Testis (tissue), 5 donors: ENCODE measurements at regions of chr4 and their contacts with region 1.

Region 1: GRCh38 chr4:13876131-13876530 is 248.6 kb upstream of the BOD1L1 start:
- DNase-seq: no peak
- H3K4me3 ChIP-seq: no peak overlapping the region
- H3K27ac ChIP-seq: no peak overlapping the region
- H3K4me1 ChIP-seq: no peaks in the 10 kb centered on the region
- H3K27me3 ChIP-seq: no peaks in the 10 kb centered on the region
- CTCF ChIP-seq: no peak
- POLR2A ChIP-seq: no peak

Region 2: DNA sequence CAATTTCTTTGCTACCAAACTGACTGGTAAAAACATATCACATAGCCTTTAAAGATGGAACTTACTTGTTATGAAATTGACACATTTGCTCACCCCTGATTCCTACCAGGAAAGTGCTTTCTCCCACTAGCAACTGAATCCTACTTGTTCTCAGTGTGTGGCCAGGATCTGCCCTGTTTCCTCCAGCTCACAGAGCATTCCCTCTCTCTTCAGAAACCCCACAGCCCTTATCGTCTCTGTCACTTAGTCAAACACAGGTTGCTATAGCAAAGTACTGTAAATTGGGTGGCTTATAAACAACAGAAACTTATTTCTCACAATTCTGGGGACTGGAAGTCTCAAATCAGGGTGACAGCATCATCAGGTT is 16.6 kb after region 1 on chr4:
- intact Hi-C with region 1: no loop called
- DNase-seq: no peak
- H3K4me3 ChIP-seq: no peak overlapping the region
- H3K27ac ChIP-seq: no peak overlapping the region
- H3K4me1 ChIP-seq: no peaks in the 10 kb centered on the region
- H3K27me3 ChIP-seq: no peaks in the 10 kb centered on the region
- CTCF ChIP-seq: no peak
- POLR2A ChIP-seq: no peak

Region 3: DNA sequence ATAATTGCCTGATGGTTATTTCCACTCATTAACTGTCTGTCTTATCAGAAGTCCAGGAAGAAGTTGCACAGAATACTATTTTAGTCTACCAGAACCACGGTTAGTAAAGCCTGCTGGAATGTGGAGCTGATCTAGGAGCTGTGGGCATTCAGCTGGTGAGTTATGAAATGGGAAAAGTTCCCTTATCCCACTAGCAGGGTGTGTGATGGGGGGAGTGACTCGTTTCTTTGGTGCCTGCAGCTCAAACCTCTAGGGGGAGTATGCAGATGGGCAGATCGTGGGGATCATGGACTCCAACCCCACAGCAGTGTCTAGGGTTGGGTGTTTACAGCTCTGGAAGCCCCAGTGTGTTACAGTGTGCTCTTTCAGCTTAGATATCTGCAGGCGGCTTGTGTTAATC is 57.1 kb after region 1 on chr4:
- intact Hi-C with region 1: no loop called
- DNase-seq: no peak
- H3K4me3 ChIP-seq: no peak overlapping the region
- H3K27ac ChIP-seq: peak overlapping the region; percentile 49 to 68
- H3K4me1 ChIP-seq: peaks cover 27% of the 10 kb centered on the region
- H3K27me3 ChIP-seq: no peaks in the 10 kb centered on the region
- CTCF ChIP-seq: peak in 1 of 3 experiments; percentile 5
- POLR2A ChIP-seq: no peak

Region 4: GRCh38 chr4:14152834-14153519 is 276.8 kb after region 1 on chr4:
- intact Hi-C with region 1: no loop called
- DNase-seq: no peak
- H3K4me3 ChIP-seq: no peak overlapping the region
- H3K27ac ChIP-seq: no peak overlapping the region
- H3K4me1 ChIP-seq: no peaks in the 10 kb centered on the region
- H3K27me3 ChIP-seq: no peaks in the 10 kb centered on the region
- CTCF ChIP-seq: no peak
- POLR2A ChIP-seq: no peak

Region 5: DNA sequence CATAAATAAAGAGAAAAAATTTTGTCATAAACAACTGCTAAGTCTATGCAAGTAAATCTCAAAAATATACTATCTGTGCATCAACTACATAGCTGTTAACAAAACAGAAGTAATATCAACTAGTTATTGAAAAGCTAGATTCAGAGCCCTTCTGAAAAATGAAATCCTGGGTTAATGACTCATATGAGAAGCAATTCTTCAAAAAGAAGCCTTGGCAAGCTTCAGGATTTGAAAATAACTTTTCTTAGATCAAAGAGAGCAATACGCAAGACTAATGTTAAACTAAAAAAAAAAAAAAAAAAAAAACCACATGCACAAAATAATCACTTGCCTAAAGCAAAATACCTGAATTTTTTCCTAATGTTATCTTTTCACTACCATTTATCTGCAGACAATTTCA is 317.5 kb after region 1 on chr4:
- intact Hi-C with region 1: loop called (anchors 5 kb)
- DNase-seq: no peak
- H3K4me3 ChIP-seq: no peak overlapping the region
- H3K27ac ChIP-seq: no peak overlapping the region
- H3K4me1 ChIP-seq: no peaks in the 10 kb centered on the region
- H3K27me3 ChIP-seq: no peaks in the 10 kb centered on the region
- CTCF ChIP-seq: no peak
- POLR2A ChIP-seq: no peak